Esophagus muscularis mucosa (tissue), 4 donors: ENCODE measurements at regions of chr1 and their contacts with region 1.

Region 1: GRCh38 chr1:39973503-39974135 is 18.7 kb downstream of the MFSD2A start:
- DNase-seq: no peak
- H3K4me3 ChIP-seq: no peak overlapping the region
- H3K27ac ChIP-seq: no peak overlapping the region
- H3K4me1 ChIP-seq: peaks cover 0 to 8% (median 1%) of the 10 kb centered on the region in 4 donors
- H3K27me3 ChIP-seq: peaks cover 0 to 12% (median 0%) of the 10 kb centered on the region in 4 donors
- CTCF ChIP-seq: peak; percentile 96 to 97 (median 96)
- EP300 ChIP-seq: no peak
- POLR2A ChIP-seq: no peak

Region 2: DNA sequence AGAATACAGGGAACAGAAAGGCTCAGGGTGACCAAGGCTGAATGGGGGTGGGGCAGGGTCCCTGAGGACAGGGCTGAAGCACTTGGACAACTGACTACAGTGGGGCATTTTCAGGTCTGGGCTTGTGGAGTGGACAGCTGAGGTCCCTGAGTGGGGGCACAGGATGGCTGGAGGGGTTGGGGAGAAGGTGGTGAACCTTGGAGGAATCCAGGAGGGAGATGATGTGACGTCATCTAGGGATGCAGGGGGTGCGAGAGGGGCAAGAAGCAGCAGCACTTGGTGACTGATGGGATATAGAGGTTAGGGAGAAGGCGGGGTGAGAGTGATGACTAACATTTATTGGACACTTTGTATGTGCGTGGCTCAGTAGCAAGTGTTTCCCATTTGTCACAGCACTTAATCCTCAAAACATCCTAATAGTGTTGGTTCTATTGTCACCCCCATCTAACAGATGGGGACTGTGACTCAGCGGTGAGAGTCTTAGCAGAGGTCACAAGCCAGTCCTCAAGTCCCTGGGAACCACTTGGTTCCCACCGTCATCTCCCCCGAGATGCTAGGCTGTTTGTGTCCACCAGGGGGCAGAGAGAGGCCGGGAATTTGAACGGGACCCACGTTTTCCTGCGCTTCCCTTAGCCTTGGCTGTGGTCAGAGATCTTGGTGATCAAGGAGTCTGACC is 157.1 kb before region 1 on chr1:
- intact Hi-C with region 1: loop called (anchors 1 kb)
- DNase-seq: no peak
- H3K4me3 ChIP-seq: no peak overlapping the region
- H3K27ac ChIP-seq: no peak overlapping the region
- H3K4me1 ChIP-seq: peaks cover 0 to 5% (median 0%) of the 10 kb centered on the region in 4 donors
- H3K27me3 ChIP-seq: peaks cover 0 to 32% (median 0%) of the 10 kb centered on the region in 4 donors
- CTCF ChIP-seq: peak; percentile 82 to 94 (median 87)
- EP300 ChIP-seq: no peak
- POLR2A ChIP-seq: no peak

Region 3: GRCh38 chr1:39919545-39919944 is 54.1 kb before region 1 on chr1:
- intact Hi-C with region 1: loop called (anchors 2 kb)
- DNase-seq: no peak
- H3K4me3 ChIP-seq: no peak overlapping the region
- H3K27ac ChIP-seq: no peak overlapping the region
- H3K4me1 ChIP-seq: peaks cover 0 to 5% (median 2%) of the 10 kb centered on the region in 4 donors
- H3K27me3 ChIP-seq: peaks cover 0 to 20% (median 0%) of the 10 kb centered on the region in 4 donors
- CTCF ChIP-seq: peak; percentile 40 to 58 (median 53)
- EP300 ChIP-seq: no peak
- POLR2A ChIP-seq: no peak

Region 4: DNA sequence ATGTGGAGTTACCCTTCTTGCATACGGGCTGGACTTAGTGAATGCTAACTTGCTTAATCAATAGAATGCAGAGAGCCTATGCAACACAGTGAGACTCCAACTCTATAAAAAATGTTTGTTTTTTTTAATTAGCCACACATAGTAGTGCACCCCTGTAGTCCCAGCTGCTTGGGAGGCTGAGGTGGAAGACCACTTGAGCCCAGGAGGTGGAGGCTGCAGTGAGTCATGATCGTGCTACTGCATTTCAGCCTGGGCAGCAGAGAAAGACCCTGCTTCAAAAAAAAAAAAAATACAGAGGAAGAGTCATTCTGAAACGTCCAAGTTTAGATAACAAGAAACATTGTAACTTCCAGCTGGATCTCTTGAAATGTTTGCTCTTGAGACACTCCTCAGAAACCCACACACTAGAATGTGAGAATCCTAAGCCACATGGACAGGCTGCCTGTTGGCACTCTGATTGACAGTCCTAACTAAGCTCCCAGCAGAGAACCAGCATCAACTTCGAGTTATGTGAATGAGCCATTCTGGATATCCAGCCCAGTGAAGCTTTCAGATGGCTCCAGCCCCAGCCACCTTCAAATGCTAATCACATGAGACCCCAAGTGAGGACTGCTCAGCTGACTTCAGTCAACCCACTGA is 46.9 kb after region 1 on chr1:
- intact Hi-C with region 1: no loop called
- DNase-seq: no peak
- H3K4me3 ChIP-seq: no peak overlapping the region
- H3K27ac ChIP-seq: no peak overlapping the region
- H3K4me1 ChIP-seq: no peaks in the 10 kb centered on the region
- H3K27me3 ChIP-seq: no peaks in the 10 kb centered on the region
- CTCF ChIP-seq: no peak
- EP300 ChIP-seq: no peak
- POLR2A ChIP-seq: no peak

Region 5: DNA sequence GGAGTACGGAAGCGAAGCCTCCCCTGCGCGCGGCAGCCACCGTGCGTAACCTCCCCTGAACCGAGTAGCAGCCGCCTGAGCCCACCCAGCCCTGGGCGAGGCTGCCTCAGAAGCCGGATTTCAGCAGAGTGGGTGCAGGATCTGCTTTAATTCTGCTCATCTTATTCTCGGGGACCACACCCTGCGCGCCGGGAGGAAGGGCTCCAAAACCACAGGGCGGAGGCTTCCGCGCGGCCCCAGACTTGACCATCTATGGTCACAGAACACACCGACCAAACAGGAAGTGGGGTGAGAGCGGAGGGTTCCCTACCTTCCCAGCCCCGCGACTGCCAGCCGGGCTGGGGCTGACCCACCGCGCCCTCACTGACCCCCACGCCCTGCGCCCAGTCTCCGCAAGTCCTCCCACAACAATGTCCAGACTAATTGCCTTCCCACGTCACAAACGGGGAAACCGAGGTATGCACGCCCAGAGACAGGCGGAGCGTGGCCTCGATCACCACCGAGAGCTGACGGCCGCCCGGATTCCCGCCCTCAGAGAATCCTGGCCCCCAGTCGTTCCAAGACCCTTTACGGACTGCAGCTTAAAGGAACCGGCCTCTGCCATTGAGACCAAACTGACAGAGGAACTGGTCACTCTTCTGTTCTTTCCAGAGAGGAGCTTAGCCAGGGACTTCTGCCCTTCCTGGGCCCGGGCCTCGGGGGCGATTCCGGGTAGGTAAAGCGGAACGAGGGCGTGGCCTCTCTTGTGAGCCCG is 66.3 kb after region 1 on chr1:
- intact Hi-C with region 1: loop called (anchors 10 kb)
- DNase-seq: peak; percentile 98
- H3K4me3 ChIP-seq: peak overlapping the region; percentile 89 to 100 (median 94)
- H3K27ac ChIP-seq: peak overlapping the region; percentile 98 to 100 (median 99)
- H3K4me1 ChIP-seq: peaks cover 71 to 77% (median 74%) of the 10 kb centered on the region in 4 donors
- H3K27me3 ChIP-seq: no peaks in the 10 kb centered on the region
- CTCF ChIP-seq: no peak
- EP300 ChIP-seq: no peak
- POLR2A ChIP-seq: peak; percentile 96